ENCODE measurements at regions of chr9 and their contacts with region 1.

Region 1: GRCh38 chr9:7536310-7536939 is 263.2 kb downstream of the DMAC1 start:
- DNase-seq: peak; percentile 69
- ATAC-seq: peak; percentile 76

Region 2: DNA sequence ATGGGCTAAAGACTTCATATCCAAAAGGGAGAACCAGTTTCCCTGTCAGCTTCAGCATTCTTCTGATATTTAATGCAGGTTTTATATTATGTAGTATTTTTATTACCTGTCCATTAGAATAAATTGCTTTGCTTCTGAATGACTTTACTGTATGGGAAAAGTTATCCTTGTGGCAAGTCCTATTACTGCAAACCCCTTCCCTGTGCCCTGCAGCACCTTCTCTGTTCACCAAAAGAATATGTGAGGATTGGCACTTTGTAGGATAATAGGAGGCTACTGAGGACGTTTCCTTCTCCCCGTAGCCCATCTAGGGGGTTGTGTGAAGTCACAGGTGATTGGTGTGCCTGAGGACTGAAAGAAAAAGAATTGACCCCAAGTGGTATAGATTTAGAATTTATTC is 482.5 kb before region 1 on chr9:
- intact Hi-C with region 1: loop called (anchors 2 kb)
- DNase-seq: no peak
- ATAC-seq: no peak

Region 3: DNA sequence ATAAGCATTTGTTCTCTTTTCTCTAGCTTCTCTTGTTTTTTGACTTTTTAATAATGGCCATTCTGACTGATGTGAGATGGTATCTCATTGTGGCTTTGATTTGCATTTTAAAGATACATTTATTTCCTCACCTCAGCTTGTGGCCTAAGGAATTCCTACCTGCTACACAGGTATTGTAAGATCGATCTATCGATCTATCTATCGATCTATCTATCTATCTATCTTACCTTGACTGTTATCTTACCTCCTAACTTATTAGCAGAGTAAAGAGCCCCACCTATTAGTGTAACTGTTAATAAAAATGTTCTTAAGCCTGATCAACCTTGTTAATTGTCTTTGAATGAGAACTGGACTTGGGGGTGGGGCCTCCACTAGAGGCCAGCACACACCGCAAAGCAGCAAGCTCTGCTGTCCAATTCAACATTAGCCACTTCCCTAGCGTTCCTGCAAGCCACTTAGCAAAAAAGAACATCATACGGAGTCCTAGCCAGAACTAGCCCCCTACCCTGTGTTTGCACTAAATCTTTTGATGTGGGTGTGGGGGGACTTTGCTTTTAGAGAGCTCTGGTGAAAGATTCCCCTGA is 262.9 kb before region 1 on chr9:
- intact Hi-C with region 1: loop called (anchors 10 kb)
- DNase-seq: no peak
- ATAC-seq: no peak

Region 4: GRCh38 chr9:7402334-7403027 is 133.9 kb before region 1 on chr9:
- intact Hi-C with region 1: loop called (anchors 2 kb)
- DNase-seq: no peak
- ATAC-seq: no peak

Measured in Right ventricle myocardium inferior (tissue), 1 donor.